A673 (cell line): ENCODE measurements at regions of chr17 and their contacts with region 1.

Region 1: DNA sequence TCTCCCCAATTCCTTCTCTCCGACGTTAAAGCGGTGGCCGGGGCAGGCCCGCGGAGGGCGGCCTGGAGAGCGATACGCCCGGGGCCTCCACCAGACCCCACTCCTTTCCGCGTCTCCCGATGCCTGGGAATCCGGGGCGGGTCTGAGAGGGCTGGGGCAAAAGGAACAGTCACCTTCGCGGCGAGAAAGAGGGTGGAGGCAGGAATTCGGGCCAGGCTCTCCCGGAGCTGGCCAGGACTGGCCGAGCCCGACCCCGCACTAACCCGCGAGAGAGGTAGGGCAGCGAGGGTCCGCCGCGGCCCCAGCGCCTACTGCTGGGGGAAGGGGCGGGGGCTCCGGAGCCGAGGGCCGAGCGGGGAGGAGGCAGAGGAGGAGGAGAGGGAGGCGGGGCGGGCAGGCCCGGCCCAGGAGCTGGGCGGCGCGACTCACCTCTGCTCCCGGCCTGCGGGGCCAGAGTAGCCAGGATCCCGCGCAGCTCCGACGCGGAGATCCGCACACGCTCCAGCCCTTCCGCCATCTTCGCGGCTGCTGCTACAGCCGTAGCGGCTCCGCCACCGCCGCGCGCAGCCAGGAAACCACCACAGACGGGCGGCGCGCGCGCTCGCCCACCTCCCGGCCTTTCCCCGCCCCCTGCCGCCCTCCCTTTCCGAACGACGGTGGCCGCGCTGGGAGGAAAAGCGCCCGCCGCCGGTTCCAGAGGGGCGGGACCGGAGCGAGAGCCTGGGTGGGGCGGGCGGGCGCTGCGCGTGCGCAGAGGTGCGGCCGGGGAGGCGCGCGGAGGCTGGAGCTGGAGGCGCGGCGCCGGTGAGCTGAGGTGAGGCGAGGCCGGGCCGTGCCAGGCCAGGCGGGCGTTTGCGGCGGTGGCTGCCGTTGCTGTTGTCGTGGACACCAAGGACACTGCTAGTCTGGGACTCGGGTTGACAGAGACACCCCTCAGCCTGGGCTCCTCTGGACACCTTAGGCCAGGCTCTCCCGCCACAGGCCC is at the starts of genes SMG6 and SRR:
- DNase-seq: peak; percentile 96
- H3K4me3 ChIP-seq: peak within 1 kb of the TSS; percentile 94
- H3K27ac ChIP-seq: peak within 1 kb of the TSS; percentile 93
- H3K4me1 ChIP-seq: peaks cover 5% of the 10 kb centered on the region
- H3K27me3 ChIP-seq: no peaks in the 10 kb centered on the region
- CTCF ChIP-seq: no peak
- total RNA-seq, gene SMG6: 36.1 and 38.4 TPM in 2 replicates
- total RNA-seq, gene SRR: 37.9 and 51.0 TPM in 2 replicates

Region 2: GRCh38 chr17:2110436-2110835 is 193.1 kb before region 1 on chr17:
- CTCF ChIA-PET with region 1: no interaction called
- POLR2A ChIA-PET with region 1: interaction called, 13 read pairs
- intact Hi-C with region 1: no loop called
- DNase-seq: no peak
- H3K4me3 ChIP-seq: no peak overlapping the region
- H3K27ac ChIP-seq: no peak overlapping the region
- H3K4me1 ChIP-seq: peaks cover 34% of the 10 kb centered on the region
- H3K27me3 ChIP-seq: no peaks in the 10 kb centered on the region
- CTCF ChIP-seq: no peak